Calu3 (cell line): ENCODE measurements at regions of chr7 and their contacts with region 1.

Region 1: DNA sequence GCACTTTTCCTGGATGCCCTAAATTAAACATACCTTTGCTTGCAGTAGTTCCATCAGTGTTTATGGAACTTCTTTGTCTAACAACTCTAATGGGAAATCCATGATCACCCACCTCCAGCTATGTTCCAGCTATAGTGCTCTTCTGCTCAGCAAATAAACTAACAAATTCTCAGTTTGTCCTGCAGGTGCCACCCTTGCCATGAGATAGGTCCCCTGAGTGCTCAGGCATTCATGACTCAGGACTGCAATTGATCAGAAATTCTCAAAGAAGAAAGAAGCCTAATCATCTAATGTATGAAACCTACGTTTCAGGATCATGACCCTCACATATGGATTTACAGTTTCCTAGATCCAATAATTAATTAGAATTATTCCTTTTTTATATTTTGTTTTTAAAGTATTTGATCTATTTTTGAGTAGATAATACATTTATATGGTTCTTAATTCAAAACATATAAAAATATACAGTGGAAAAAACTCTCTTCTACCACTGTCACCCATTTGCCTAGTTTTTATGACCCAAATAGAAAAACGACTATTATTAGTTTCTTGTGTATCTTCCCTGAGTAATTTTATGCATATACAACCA is 48.7 kb upstream of the DYNC1I1 start:
- DNase-seq: peak; percentile 56
- H3K4me3 Mint-ChIP-seq: no peak overlapping the region
- H3K27ac Mint-ChIP-seq: no peak overlapping the region
- H3K4me1 Mint-ChIP-seq: no peaks in the 10 kb centered on the region
- H3K27me3 Mint-ChIP-seq: peaks cover 67% of the 10 kb centered on the region
- CTCF ChIP-seq: no peak

Region 2: DNA sequence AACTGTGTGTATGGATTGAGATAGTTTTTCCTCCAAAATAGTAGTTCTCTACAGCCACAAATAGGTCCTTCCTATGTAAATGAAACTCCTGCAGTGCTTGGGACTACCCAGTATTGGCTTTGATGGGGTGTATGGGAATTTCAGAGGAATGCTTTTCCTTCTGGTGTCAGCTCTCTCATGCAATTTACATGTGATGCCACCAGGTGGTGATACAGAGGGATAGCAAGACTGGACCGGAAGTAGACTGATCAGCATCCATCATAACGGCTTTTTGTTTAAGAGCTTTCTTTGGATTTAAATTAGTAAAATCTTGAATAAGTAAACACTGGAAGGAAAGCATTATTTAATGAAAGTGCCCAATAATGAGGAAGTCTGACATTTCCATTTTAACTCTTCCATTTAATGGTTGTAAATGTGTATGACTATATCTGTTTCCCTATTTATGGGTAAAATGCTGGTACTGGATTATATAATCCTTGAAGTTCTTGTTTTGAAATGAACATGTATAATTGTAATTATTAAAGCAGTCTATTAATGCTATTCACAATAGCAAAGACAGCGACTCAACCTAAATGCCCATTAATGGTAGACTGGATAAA is 71.3 kb after region 1 on chr7:
- CTCF ChIA-PET with region 1: interaction called, 3 read pairs
- intact Hi-C with region 1: loop called (anchors 10 kb)
- DNase-seq: peak; percentile 1
- H3K4me3 Mint-ChIP-seq: no peak overlapping the region
- H3K27ac Mint-ChIP-seq: no peak overlapping the region
- H3K4me1 Mint-ChIP-seq: no peaks in the 10 kb centered on the region
- H3K27me3 Mint-ChIP-seq: peaks cover 44% of the 10 kb centered on the region
- CTCF ChIP-seq: peak; percentile 24